ENCODE measurements at regions of chr5 and their contacts with region 1.

Region 1: DNA sequence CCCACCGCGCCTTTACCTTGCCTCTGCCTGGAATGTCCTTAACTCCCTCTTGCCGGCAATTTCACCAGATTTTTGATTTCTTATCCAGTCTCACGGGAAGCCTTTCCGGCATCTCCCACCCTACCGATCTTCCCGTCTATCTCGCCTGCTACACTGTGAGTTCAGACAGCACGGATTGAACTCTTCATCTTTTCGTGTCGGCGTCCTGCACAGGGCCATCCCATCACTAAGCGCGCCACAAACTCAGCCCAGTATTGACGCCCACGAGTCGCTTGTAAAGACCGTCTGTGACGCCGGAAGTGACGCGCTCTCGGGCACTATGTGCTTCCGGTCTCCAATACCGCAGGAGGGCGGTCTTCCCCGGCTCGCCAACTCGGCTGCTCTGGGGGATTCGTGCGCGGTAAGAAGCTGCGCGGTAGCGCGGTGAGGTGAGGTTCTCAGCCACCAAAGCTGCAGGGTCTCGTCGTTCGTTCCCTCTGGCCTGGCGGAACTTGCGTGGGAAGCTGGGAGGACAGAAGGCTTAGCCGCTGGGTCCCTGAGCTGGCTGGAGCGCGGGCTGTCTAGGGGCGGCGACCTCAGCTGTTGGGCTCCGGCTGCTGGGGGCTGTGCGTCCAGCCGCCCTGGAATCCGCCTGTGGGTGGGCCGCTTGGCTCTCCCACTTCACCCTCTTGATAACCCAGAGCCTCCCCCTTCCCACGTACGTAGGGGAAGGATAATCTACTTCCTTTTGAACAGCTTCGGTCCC is at the start of gene ZCCHC9:
- DNase-seq: peak; percentile 95
- ATAC-seq: peak; percentile 92
- H3K4me3 ChIP-seq: peak within 1 kb of the TSS; percentile 77 to 98 (median 91)
- H3K4me3 Mint-ChIP-seq: peak within 1 kb of the TSS; percentile 91
- H3K27ac ChIP-seq: peak within 1 kb of the TSS; percentile 63 to 89
- H3K27ac Mint-ChIP-seq: peak within 1 kb of the TSS; percentile 93
- H3K4me1 ChIP-seq: peaks cover 23 to 26% of the 10 kb centered on the region in 2 donors
- H3K4me1 Mint-ChIP-seq: peaks cover 33% of the 10 kb centered on the region
- H3K27me3 ChIP-seq: no peaks in the 10 kb centered on the region
- H3K27me3 Mint-ChIP-seq: no peaks in the 10 kb centered on the region
- CTCF ChIP-seq: peak; percentile 29
- total RNA-seq, gene ZCCHC9: 23.0 and 23.7 TPM in 2 replicates

Region 2: DNA sequence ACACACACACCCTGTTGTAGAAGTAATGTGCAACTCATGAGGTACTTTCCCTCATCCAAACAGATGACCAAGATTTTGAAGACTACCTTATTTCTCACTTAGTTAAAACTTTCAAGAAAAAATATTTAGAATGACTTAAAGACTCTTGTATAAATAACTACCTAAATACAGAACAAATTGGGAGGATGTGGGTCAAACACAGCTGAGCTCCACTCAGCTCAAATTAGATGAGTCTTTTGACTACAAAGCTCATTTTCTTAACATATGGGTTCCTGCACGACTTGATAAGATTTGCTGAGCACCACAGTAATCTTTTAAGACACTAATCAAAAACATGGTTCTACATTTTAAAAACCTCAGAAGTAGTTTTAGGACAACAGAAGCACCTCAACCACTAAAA is 1319.3 kb before region 1 on chr5:
- CTCF ChIA-PET with region 1: no interaction called
- POLR2A ChIA-PET with region 1: no interaction called
- intact Hi-C with region 1: loop called (anchors 5 kb)
- DNase-seq: no peak
- ATAC-seq: no peak
- H3K4me3 ChIP-seq: no peak overlapping the region
- H3K4me3 Mint-ChIP-seq: peak overlapping the region; percentile 21
- H3K27ac ChIP-seq: peak overlapping the region in 1 of 2 donors; percentile 45
- H3K27ac Mint-ChIP-seq: peak overlapping the region; percentile 69
- H3K4me1 ChIP-seq: peaks cover 13 to 22% of the 10 kb centered on the region in 2 donors
- H3K4me1 Mint-ChIP-seq: peaks cover 26% of the 10 kb centered on the region
- H3K27me3 ChIP-seq: no peaks in the 10 kb centered on the region
- H3K27me3 Mint-ChIP-seq: no peaks in the 10 kb centered on the region
- CTCF ChIP-seq: no peak

Region 3: DNA sequence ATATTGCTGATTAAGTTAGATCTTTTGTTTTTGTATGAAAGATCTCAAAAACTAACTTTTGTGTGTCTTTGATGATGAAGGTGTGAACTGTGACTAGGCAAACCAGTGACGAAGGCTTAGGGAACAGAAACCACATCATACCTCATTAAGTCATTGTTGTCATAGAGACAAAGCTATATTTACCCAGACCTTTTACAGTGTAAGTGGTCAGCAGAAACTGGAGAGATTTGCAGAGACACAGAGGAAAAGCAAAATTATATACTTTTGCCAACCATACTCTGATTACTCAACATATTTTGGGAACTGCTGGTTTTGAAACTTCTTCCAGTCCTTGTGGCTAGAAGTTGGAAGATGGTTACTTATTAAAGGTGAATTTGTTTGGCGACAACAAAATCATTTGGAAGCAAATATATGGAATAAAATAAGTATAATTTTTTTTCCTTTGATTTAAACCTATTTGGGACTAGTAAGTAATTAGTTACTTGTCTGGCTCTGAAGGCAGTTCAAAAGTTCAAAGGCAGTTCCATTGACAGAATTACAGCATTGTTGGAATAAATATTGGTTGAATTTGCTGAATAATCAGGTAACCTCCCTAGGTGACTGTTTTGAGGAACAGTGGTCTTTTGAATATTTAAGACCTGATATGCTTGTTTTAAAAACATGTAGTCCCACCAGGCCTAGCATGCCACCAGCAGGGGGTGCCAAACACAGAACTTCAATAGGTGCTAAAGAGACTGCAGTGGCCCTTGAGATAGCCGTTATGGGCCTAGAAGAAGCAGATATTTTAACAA is 872.9 kb after region 1 on chr5:
- CTCF ChIA-PET with region 1: interaction called, 4 read pairs
- POLR2A ChIA-PET with region 1: no interaction called
- intact Hi-C with region 1: loop called (anchors 10 kb)
- DNase-seq: peak; percentile 74
- ATAC-seq: peak; percentile 88
- H3K4me3 ChIP-seq: no peak overlapping the region
- H3K4me3 Mint-ChIP-seq: peak overlapping the region; percentile 31
- H3K27ac ChIP-seq: peak overlapping the region in 1 of 2 donors; percentile 32
- H3K27ac Mint-ChIP-seq: peak overlapping the region; percentile 60
- H3K4me1 ChIP-seq: peaks cover 9% of the 10 kb centered on the region in 2 donors
- H3K4me1 Mint-ChIP-seq: peaks cover 18% of the 10 kb centered on the region
- H3K27me3 ChIP-seq: no peaks in the 10 kb centered on the region
- H3K27me3 Mint-ChIP-seq: no peaks in the 10 kb centered on the region
- CTCF ChIP-seq: peak; percentile 71

Region 4: DNA sequence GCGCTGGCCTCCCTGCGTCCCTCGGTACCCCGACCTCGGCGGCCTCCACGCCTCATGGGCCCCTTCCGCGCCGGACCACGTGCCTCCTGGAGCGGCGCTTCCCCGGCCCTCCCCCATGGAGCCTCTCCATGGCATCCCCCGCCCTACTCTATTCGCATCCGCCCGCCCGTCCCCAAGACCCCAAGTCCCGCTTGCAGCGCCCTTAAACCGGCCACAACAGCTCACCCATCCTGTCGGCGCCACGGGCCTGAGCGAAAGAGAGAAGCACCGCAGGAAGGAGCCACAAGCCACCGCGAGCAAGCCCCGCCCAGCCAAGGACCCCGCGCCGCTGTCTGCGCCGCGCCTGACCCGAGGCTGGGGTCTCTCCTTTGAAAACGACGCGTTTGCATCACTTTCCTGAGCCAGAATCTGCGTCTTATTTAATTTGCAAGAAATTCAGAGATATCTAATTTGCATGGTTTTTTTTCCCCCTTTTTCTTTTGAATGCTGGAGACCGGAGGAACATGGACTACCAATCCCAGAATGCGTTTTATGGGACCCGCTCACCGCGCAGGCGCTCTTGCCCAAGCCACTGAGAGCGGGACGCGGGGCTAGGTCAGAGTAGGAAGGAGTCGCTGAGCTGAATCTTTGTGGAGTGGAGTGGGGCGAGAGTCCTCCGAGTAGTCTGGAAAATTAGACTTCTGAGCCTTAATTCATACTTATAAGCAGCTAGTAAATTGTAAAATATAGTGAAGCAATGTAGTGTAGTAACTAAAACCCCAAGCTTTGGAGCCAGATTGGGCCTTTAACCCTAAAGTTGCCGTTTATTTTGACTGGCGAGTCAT is 976.9 kb after region 1 on chr5 and contains the start of gene RPS23:
- CTCF ChIA-PET with region 1: interaction called, 4 read pairs
- POLR2A ChIA-PET with region 1: no interaction called
- intact Hi-C with region 1: loop called (anchors 1 kb)
- DNase-seq: peak; percentile 93
- ATAC-seq: peak; percentile 95
- H3K4me3 ChIP-seq: peak within 1 kb of the TSS; percentile 80 to 98 (median 90)
- H3K4me3 Mint-ChIP-seq: peak within 1 kb of the TSS; percentile 91
- H3K27ac ChIP-seq: peak within 1 kb of the TSS; percentile 82 to 89
- H3K27ac Mint-ChIP-seq: peak within 1 kb of the TSS; percentile 94
- H3K4me1 ChIP-seq: peaks cover 26 to 27% of the 10 kb centered on the region in 2 donors
- H3K4me1 Mint-ChIP-seq: peaks cover 37% of the 10 kb centered on the region
- H3K27me3 ChIP-seq: no peaks in the 10 kb centered on the region
- H3K27me3 Mint-ChIP-seq: no peaks in the 10 kb centered on the region
- CTCF ChIP-seq: no peak
- total RNA-seq, gene RPS23: 3,327 and 3,420 TPM in 2 replicates

Region 5: GRCh38 chr5:83076742-83077661 is 1775.6 kb after region 1 on chr5 and contains the starts of genes TMEM167A and XRCC4:
- CTCF ChIA-PET with region 1: no interaction called
- POLR2A ChIA-PET with region 1: no interaction called
- intact Hi-C with region 1: loop called (anchors 1 kb)
- DNase-seq: peak; percentile 97
- ATAC-seq: peak; percentile 99
- H3K4me3 ChIP-seq: peak within 1 kb of the TSS; percentile 91 to 100 (median 91)
- H3K4me3 Mint-ChIP-seq: peak within 1 kb of the TSS; percentile 98
- H3K27ac ChIP-seq: peak within 1 kb of the TSS; percentile 82 to 88
- H3K27ac Mint-ChIP-seq: peak within 1 kb of the TSS; percentile 97
- H3K4me1 ChIP-seq: peaks cover 12 to 17% of the 10 kb centered on the region in 2 donors
- H3K4me1 Mint-ChIP-seq: peaks cover 54% of the 10 kb centered on the region
- H3K27me3 ChIP-seq: no peaks in the 10 kb centered on the region
- H3K27me3 Mint-ChIP-seq: no peaks in the 10 kb centered on the region
- CTCF ChIP-seq: no peak
- total RNA-seq, gene TMEM167A: 39.1 and 41.2 TPM in 2 replicates
- total RNA-seq, gene XRCC4: 7.3 and 7.7 TPM in 2 replicates